ENCODE measurements at regions of chr6 and their contacts with region 1.

Region 1: GRCh38 chr6:10954590-10955010 is 67.7 kb downstream of the SYCP2L start:
- DNase-seq: peak; percentile 51
- H3K4me3 Mint-ChIP-seq: no peak overlapping the region
- H3K27ac Mint-ChIP-seq: no peak overlapping the region
- H3K4me1 Mint-ChIP-seq: no peaks in the 10 kb centered on the region
- H3K27me3 Mint-ChIP-seq: peaks cover 10% of the 10 kb centered on the region

Region 2: DNA sequence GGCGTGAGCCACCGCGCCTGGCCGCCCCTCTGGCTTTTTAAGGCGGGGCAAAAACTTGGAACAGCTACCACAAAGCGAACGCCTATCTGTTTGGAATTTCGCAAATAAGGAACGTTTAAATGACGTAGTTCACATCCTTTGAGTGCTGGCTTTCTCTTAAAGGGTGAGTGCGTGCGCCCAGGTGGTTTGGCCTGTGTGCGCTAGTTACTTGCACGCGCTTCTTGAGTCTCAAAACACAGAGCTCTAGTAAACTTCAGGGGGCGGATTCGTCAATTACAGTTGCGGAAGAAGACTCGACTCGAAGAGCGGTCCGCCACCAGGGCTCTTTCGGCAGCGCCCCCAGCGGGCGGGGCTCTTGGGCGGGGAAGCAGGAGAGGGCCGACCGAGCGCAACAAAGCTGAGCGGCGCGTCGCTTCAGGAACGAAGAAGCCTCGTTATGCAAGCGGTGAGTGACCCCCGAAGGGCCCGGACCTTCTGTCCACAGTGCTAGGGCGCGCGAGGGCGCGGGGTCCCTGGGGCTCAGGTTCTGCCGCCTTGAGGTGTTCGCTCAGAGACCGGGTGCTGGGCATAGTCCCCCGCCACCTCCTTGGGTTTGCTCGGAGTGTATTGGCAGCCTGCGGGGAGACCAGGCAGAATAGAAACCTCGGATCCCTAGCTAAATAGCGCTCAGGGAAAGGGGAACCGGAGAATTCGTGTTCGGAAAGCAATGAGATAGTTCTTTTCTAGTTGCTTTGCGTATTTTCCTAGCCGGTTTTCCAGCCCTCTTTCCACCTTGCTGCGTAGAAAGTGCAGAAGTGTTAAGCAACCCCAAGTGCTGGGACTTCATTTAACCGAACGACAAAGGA is 67.7 kb before region 1 on chr6 and contains the start of gene SYCP2L:
- intact Hi-C with region 1: no loop called
- DNase-seq: no peak
- H3K4me3 Mint-ChIP-seq: peak within 1 kb of the TSS; percentile 52
- H3K27ac Mint-ChIP-seq: no peak within 1 kb of the TSS
- H3K4me1 Mint-ChIP-seq: peaks cover 4% of the 10 kb centered on the region
- H3K27me3 Mint-ChIP-seq: peaks cover 77% of the 10 kb centered on the region
- total RNA-seq, gene SYCP2L: 0.11 and 0.23 TPM in 2 replicates

Region 3: DNA sequence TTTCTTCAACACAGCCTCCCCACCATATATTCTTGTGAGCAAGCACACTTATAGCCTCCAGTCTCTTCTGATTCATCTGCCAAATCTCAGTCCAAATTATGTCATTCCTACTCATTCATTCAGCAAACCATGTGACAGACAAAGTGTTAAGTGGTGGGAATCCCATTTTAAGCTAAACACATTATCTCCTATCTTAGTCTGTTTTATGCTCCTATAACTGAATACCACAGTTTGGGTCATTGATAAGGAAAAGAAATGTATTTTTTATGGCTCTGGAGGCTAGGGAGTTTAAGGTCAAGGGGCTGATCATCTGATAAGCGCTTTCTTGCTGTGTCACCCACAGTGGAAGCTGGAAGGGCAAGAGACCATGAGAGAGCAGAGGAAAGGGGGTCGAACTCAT is 115.2 kb after region 1 on chr6:
- intact Hi-C with region 1: loop called (anchors 2 kb)
- DNase-seq: no peak
- H3K4me3 Mint-ChIP-seq: no peak overlapping the region
- H3K27ac Mint-ChIP-seq: no peak overlapping the region
- H3K4me1 Mint-ChIP-seq: no peaks in the 10 kb centered on the region
- H3K27me3 Mint-ChIP-seq: peaks cover 10% of the 10 kb centered on the region

Region 4: GRCh38 chr6:11575408-11576033 is 620.9 kb after region 1 on chr6:
- intact Hi-C with region 1: loop called (anchors 2 kb)
- DNase-seq: peak; percentile 24
- H3K4me3 Mint-ChIP-seq: no peak overlapping the region
- H3K27ac Mint-ChIP-seq: no peak overlapping the region
- H3K4me1 Mint-ChIP-seq: peaks cover 3% of the 10 kb centered on the region
- H3K27me3 Mint-ChIP-seq: peaks cover 2% of the 10 kb centered on the region

Measured in activated T-helper 2 cell treated with anti-CD3 and anti-CD28 coated beads, Interferon-gamma antibody, Interleukin-2, Interleukin-4, amounts not matched to agents 10 μg/mL and 5 μg/mL and 100 μg/mL, durations not matched to agents 14 hours and 24 hours and 36 hours (primary cell).